Activated T-helper 1 cell treated with anti-CD3 and anti-CD28 coated beads, Interleukin-12 subunit alpha, Interleukin-12 subunit beta, Interleukin-2, Interleukin-4 antibody, amounts not matched to agents 30 ng/mL and 10 ng/mL and 1 ng/mL, durations not matched to agents 14 hours and 24 hours and 36 hours (primary cell): ENCODE measurements at regions of chr12 and their contacts with region 1.

Region 1: GRCh38 chr12:89352492-89353187 is at the start of gene DUSP6:
- DNase-seq: peak; percentile 92
- H3K4me3 Mint-ChIP-seq: peak within 1 kb of the TSS; percentile 98
- H3K27ac Mint-ChIP-seq: peak within 1 kb of the TSS; percentile 97
- H3K4me1 Mint-ChIP-seq: peaks cover 46% of the 10 kb centered on the region
- H3K27me3 Mint-ChIP-seq: peaks cover 3% of the 10 kb centered on the region
- total RNA-seq, gene DUSP6: 108 and 115 TPM in 2 replicates

Region 2: DNA sequence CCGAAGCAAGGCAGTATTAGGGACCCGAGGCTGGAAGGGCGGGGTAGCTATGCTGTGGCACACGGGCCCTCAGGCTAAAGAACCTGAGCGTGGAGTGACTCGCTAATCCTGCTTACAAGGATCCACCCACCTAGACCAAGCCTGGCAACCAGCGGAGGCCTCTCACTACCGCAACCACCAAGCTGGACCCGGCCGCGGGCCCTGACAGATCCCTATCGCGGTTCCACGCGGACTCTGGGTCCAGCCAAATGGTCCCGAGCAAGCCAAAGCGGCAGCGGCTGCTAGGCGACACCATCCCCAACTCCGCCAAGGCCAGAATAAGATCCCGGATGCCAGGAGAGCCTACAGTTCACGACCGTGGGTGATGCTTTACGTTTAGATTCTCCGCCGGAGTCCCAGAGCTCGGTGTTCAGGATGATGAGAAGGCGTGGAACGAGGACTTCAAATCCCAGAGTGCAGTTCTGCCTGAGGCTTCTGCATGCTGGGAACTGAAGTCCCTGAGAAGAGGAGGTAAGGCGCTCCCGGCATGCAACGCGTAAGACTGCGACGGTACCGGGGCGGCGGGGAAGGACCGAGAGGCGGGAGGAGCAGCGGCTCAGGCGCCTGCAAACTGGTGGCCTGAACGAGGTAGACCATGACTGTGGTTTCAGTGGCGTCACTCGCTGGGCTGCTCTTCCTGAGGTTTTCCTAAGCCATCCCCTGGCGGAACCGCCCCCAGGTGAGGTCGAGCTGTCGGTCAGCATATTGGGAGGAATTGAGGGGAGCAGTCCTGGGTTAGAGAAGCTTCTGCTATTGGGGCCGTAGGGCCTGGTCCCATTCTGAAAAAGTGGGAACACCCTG is 1210.7 kb before region 1 on chr12 and contains the starts of genes CEP290 and TMTC3:
- intact Hi-C with region 1: loop called (anchors 1 kb)
- DNase-seq: peak; percentile 92
- H3K4me3 Mint-ChIP-seq: peak within 1 kb of the TSS; percentile 91
- H3K27ac Mint-ChIP-seq: peak within 1 kb of the TSS; percentile 95
- H3K4me1 Mint-ChIP-seq: peaks cover 34% of the 10 kb centered on the region
- H3K27me3 Mint-ChIP-seq: no peaks in the 10 kb centered on the region
- total RNA-seq, gene CEP290: 15.5 and 17.0 TPM in 2 replicates
- total RNA-seq, gene TMTC3: 6.9 and 7.1 TPM in 2 replicates

Region 3: DNA sequence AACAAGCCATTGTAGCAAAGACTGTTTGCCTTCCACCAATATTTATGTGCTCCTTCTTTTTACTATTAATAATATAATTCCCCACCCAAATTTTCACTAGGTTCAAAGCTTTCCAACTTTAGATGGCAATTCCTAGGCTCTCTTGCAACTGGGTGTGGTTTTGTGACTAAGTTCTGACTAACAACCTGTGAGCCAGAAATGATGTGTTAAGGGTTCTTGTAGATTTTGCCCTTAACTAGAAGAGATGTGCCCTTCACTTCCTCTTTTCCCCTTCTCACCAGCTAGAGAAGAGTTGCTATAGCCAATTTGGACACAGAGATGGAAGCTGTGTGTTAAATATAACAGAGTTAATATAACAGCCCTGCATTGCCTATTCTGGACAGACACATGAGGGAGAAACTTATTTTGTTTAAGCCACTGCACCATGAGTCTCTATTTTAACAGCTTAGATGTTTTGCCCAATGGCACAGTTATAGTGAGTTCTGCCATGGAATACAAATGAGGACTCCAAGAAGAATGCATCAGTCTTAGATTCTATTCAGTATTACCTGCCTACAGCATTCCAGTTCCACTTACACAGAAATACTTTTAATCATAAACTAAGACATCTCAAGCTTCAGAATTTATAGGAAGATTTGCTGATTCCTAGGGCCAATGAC is 216.5 kb before region 1 on chr12:
- intact Hi-C with region 1: loop called (anchors 1 kb)
- DNase-seq: no peak
- H3K4me3 Mint-ChIP-seq: no peak overlapping the region
- H3K27ac Mint-ChIP-seq: peak overlapping the region; percentile 58
- H3K4me1 Mint-ChIP-seq: peaks cover 33% of the 10 kb centered on the region
- H3K27me3 Mint-ChIP-seq: peaks cover 2% of the 10 kb centered on the region

Region 4: GRCh38 chr12:89261982-89262381 is 90.7 kb before region 1 on chr12:
- intact Hi-C with region 1: loop called (anchors 2 kb)
- DNase-seq: no peak
- H3K4me3 Mint-ChIP-seq: no peak overlapping the region
- H3K27ac Mint-ChIP-seq: no peak overlapping the region
- H3K4me1 Mint-ChIP-seq: peaks cover 34% of the 10 kb centered on the region
- H3K27me3 Mint-ChIP-seq: no peaks in the 10 kb centered on the region

Region 5: DNA sequence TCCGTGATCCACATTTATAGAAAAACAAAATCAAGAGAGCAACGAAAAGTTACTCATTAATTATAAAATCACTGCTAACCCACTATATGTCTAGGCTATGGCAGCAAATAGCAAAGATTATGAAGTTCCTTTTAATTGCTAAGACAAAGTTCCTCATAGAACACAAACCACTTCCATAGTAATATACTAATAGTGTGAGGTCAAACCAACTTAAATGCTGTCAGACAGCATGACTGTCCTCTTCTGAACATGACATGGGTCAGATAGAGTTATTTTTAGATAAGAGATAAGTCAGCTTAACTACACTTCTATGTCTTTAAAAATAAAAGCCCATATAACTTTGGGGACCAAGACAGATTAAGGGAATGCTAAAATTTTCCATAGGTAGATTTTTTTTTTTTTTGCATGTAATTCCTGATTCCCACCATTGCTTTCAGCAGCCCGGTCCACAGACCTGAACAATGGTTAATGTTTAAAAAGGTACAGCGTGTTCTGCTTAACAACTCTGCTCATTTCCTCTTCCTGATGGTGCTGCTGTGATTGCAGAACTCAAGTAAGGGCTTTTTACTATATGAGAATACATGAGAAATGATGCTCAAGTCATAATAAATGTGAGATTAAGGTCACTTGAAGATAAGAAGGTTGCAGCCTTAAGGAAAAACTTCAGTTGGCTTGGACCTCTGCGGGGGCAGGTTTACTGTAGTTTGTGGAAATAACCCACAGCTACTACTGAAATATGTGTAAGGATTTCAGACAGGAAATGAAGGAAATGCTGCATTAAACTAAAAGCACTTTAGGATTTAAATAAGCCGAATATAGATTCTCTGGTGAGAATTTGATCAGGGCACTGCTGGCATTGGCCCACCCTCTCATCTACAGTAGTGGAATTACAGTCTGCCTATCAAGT is 37.4 kb after region 1 on chr12:
- intact Hi-C with region 1: loop called (anchors 1 kb)
- DNase-seq: no peak
- H3K4me3 Mint-ChIP-seq: no peak overlapping the region
- H3K27ac Mint-ChIP-seq: peak overlapping the region; percentile 78
- H3K4me1 Mint-ChIP-seq: peaks cover 33% of the 10 kb centered on the region
- H3K27me3 Mint-ChIP-seq: no peaks in the 10 kb centered on the region

Region 6: GRCh38 chr12:89524541-89525285 is 172.1 kb after region 1 on chr12 and contains the start of gene GALNT4:
- intact Hi-C with region 1: loop called (anchors 1 kb)
- DNase-seq: peak; percentile 74
- H3K4me3 Mint-ChIP-seq: peak within 1 kb of the TSS; percentile 92
- H3K27ac Mint-ChIP-seq: peak within 1 kb of the TSS; percentile 94
- H3K4me1 Mint-ChIP-seq: peaks cover 45% of the 10 kb centered on the region
- H3K27me3 Mint-ChIP-seq: no peaks in the 10 kb centered on the region
- total RNA-seq, gene GALNT4: 8.7 TPM in 2 replicates